ENCODE measurements at regions of chr10 and their contacts with region 1.

Region 1: DNA sequence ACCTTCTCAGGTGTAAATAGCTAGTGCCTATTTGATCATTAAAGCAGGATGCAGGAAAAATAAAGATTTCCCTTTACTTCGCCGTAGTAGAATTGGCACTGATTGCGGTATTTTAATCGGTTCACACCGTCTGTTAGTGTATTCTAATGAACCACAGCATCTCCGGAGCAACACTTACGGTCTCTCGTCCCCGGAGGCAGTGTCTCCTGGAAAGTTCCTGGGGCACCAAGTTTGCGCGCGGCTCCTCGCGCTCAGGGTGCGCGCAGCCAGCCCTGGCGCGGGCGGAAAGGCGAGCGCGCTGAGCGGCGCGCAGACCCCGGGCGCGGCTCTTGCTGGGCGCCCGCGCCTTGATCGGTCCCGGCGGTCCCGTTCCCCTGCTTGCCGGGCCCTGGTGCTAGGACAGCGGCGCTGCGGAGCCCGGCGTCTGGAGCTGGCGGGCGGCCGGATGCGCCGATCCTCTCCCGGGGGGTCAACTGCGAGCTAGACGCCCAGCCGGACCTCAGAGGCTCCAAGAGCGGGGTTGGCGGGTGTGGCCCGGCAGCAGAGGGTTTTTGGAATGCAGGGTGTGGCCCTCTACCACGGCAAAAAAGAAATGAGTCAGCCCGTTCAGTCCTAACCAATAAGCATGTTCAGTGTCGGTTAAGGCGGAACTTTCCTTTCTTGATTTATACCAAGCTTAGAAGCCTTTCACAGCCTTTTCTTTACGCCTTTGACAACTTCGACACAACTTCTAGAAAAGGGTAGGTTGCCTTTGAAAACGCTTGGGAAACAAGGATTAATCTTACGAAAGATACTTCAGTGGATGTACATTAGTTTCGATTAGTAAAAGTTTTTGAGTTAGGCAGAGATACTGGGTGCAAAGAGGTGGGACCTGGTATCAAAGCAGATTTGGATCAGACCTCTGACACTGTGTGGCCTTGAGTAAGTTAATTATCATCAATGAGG is 166.8 kb upstream of the ASAH2 start:
- DNase-seq: peak; percentile 91
- H3K4me3 Mint-ChIP-seq: peak overlapping the region; percentile 83
- H3K27ac Mint-ChIP-seq: peak overlapping the region; percentile 91
- H3K4me1 Mint-ChIP-seq: peaks cover 11% of the 10 kb centered on the region
- H3K27me3 Mint-ChIP-seq: no peaks in the 10 kb centered on the region
- CTCF ChIP-seq: no peak

Region 2: GRCh38 chr10:49585387-49585786 is 832.8 kb before region 1 on chr10:
- CTCF ChIA-PET with region 1: no interaction called
- POLR2A ChIA-PET with region 1: no interaction called
- intact Hi-C with region 1: no loop called
- DNase-seq: no peak
- H3K4me3 Mint-ChIP-seq: no peak overlapping the region
- H3K27ac Mint-ChIP-seq: peak overlapping the region; percentile 46
- H3K4me1 Mint-ChIP-seq: peaks cover 22% of the 10 kb centered on the region
- H3K27me3 Mint-ChIP-seq: no peaks in the 10 kb centered on the region
- CTCF ChIP-seq: no peak

Region 3: DNA sequence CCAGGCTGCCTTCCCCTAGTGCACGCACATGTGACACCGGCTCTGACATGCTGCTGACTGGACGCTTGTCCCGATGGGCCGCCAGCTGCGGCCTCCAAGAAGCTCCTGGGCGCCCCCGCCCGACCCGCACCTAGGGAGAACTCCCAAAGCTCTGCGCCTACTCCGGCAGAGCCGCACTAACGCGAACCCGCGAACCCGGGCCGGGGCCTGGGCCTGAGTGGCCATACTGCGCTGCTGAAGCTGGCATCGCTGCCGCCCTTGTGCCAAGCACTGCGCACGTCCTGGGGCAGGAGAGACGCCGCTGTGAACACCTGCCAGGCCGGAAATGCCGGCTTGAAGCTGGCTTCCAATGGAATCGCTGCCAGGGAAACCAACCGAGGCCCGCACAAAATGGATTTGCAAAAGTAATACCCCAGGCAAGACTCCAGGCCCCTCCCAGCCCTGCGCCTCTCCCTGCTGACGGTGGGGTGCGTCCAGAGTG is 265.3 kb before region 1 on chr10:
- CTCF ChIA-PET with region 1: no interaction called
- POLR2A ChIA-PET with region 1: no interaction called
- intact Hi-C with region 1: no loop called
- DNase-seq: no peak
- H3K4me3 Mint-ChIP-seq: no peak overlapping the region
- H3K27ac Mint-ChIP-seq: no peak overlapping the region
- H3K4me1 Mint-ChIP-seq: no peaks in the 10 kb centered on the region
- H3K27me3 Mint-ChIP-seq: no peaks in the 10 kb centered on the region
- CTCF ChIP-seq: no peak

Region 4: DNA sequence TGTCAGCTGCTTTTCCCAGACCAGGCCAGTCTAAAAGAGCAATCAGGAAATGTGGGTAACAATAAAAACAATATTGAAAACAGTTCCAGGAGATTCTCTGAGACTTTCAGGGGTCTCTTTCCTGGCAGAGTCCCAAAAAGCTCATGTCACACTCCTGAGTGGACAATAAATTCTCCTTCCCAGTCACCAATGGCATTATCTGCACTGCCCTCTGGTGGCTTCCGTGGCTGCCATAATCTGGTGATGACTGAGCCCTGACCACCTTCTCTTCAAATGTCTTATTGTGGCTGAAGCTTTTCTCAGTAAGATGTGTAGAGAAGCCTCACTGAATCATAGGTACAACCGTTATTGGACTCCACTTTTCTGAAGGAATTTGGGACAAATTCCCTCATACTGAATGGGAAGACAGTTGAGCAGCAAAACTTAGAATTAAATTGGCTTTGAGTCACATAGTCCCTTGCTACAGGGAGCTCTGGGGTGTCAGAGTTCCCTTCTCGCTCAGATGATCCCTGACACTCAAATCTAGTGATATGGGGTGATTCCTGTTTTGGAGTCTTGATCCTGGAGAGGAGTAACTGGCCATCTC is 142.4 kb before region 1 on chr10:
- CTCF ChIA-PET with region 1: interaction called, 3 read pairs
- POLR2A ChIA-PET with region 1: no interaction called
- intact Hi-C with region 1: loop called (anchors 2 kb)
- DNase-seq: peak; percentile 52
- H3K4me3 Mint-ChIP-seq: no peak overlapping the region
- H3K27ac Mint-ChIP-seq: no peak overlapping the region
- H3K4me1 Mint-ChIP-seq: no peaks in the 10 kb centered on the region
- H3K27me3 Mint-ChIP-seq: peaks cover 23% of the 10 kb centered on the region
- CTCF ChIP-seq: peak; percentile 28

Region 5: DNA sequence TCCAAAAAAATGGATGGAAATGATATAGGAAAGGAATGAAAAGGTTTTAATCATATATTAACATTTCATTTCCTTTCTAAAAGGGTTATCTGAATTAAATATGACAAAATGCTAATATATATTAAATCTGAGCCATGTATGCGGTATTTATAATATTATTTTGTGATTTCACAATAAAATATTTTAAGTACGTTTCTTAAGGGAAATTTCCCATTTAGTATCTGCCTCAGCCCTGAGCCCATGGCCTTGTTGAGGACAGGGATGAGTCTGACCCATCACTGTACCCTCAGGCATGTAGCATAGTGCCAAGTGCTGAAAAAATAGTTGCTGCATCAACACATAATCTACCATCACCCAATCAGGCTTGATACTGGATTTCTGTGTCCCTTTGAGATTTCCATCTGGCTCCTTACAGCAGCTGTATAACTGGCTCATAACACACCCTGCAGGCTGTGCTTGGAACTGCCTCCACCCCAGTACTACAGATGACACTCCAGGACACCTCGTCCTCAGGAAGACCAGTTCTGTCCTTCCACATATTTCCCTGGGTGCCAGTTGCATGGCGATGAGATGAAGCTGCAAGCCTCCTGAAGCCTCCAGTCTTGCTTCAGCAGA is 107.5 kb before region 1 on chr10:
- CTCF ChIA-PET with region 1: interaction called, 7 read pairs
- POLR2A ChIA-PET with region 1: interaction called, 16 read pairs
- intact Hi-C with region 1: no loop called
- DNase-seq: peak; percentile 54
- H3K4me3 Mint-ChIP-seq: no peak overlapping the region
- H3K27ac Mint-ChIP-seq: peak overlapping the region; percentile 80
- H3K4me1 Mint-ChIP-seq: peaks cover 12% of the 10 kb centered on the region
- H3K27me3 Mint-ChIP-seq: no peaks in the 10 kb centered on the region
- CTCF ChIP-seq: peak; percentile 24

Region 6: GRCh38 chr10:50351483-50352146 is 66.5 kb before region 1 on chr10:
- CTCF ChIA-PET with region 1: no interaction called
- POLR2A ChIA-PET with region 1: no interaction called
- intact Hi-C with region 1: no loop called
- DNase-seq: no peak
- H3K4me3 Mint-ChIP-seq: no peak overlapping the region
- H3K27ac Mint-ChIP-seq: no peak overlapping the region
- H3K4me1 Mint-ChIP-seq: no peaks in the 10 kb centered on the region
- H3K27me3 Mint-ChIP-seq: no peaks in the 10 kb centered on the region
- CTCF ChIP-seq: no peak

Region 7: DNA sequence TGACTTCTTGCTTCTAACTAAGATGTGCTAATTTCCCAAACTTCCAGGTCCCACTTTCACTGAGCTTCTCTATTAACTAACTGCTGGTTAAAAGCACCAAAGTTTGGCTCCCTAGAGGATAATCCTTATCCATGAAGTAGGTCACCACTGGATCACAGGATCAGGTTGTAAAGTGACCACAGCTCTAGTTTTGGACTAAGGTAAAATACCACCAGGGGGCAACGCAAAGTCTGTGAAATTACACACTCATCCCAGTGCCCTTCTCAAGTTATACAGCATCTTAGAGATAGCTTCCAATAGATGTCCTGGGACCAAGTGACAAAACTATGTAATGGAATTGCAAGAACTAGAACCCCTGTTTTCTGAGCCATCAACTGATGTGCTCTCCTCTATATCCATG is 50.4 kb before region 1 on chr10:
- CTCF ChIA-PET with region 1: interaction called, 12 read pairs
- POLR2A ChIA-PET with region 1: interaction called, 3 read pairs
- intact Hi-C with region 1: loop called (anchors 1 kb)
- DNase-seq: peak; percentile 58
- H3K4me3 Mint-ChIP-seq: no peak overlapping the region
- H3K27ac Mint-ChIP-seq: no peak overlapping the region
- H3K4me1 Mint-ChIP-seq: peaks cover 8% of the 10 kb centered on the region
- H3K27me3 Mint-ChIP-seq: no peaks in the 10 kb centered on the region
- CTCF ChIP-seq: peak; percentile 18

Region 8: GRCh38 chr10:50396491-50397311 is 21.5 kb before region 1 on chr10:
- CTCF ChIA-PET with region 1: interaction called, 4 read pairs
- POLR2A ChIA-PET with region 1: interaction called, 71 read pairs
- intact Hi-C with region 1: loop called (anchors 1 kb)
- DNase-seq: no peak
- H3K4me3 Mint-ChIP-seq: peak overlapping the region; percentile 8
- H3K27ac Mint-ChIP-seq: peak overlapping the region; percentile 37
- H3K4me1 Mint-ChIP-seq: peaks cover 58% of the 10 kb centered on the region
- H3K27me3 Mint-ChIP-seq: no peaks in the 10 kb centered on the region
- CTCF ChIP-seq: no peak

Region 9: GRCh38 chr10:50561816-50562215 is 143.7 kb after region 1 on chr10:
- CTCF ChIA-PET with region 1: interaction called, 4 read pairs
- POLR2A ChIA-PET with region 1: interaction called, 3 read pairs
- intact Hi-C with region 1: loop called (anchors 2 kb)
- DNase-seq: peak; percentile 56
- H3K4me3 Mint-ChIP-seq: no peak overlapping the region
- H3K27ac Mint-ChIP-seq: no peak overlapping the region
- H3K4me1 Mint-ChIP-seq: peaks cover 18% of the 10 kb centered on the region
- H3K27me3 Mint-ChIP-seq: no peaks in the 10 kb centered on the region
- CTCF ChIP-seq: peak; percentile 78

Measured in MCF 10A (cell line).